ENCODE measurements at regions of chr2 and their contacts with region 1.

Region 1: DNA sequence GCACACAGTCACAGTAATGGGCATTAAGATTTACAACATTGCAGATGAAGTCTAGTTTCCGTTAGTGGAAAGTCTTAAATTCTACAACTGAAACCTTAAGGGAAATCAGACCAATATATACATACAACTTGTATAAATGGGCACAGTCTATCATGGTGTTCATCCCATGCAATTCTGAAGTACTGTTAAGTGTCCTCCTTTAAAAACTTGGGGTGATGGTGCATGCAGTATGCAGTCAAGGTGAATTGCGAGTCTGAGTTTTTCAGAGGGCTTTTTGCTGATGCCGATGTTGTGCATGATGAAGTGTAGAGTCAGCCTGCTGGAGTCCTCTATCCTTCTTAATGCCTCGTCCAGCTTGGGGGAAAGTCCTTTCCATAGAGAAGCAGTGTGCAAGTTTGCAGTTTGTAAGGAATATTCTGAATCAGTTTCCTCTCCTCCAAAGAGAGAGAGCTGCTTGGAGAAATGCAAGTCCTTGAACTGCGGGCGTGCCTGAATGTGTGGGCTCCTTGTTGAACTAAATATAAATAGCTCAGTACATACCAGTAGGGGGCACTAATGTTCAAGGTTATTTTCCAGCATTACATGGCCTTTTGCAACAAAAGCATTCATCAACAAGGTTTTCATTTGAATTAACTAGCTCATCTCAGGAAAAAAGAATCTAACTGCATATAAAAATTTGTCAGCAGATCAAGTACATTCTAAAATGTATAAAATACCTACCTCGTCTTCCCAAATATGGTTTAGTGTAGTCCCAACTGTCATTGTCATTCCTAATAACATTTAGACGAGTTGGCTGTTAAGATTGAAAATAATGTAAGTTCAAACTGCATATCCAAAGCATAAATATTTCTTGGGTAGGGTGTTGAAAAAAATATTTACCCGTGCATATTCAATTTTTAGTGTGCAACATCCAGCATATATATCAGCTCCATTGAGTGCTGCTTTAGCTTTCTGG is 21.3 kb downstream of the HNRNPLL start:
- DNase-seq: peak in 1 of 2 donors; percentile 46
- ATAC-seq: peak; percentile 60 to 87 (median 82)
- H3K4me3 ChIP-seq: no peak overlapping the region
- H3K27ac ChIP-seq: no peak overlapping the region
- H3K4me1 ChIP-seq: peaks cover 0 to 21% (median 9%) of the 10 kb centered on the region in 9 donors
- H3K27me3 ChIP-seq: no peaks in the 10 kb centered on the region
- CTCF ChIP-seq: peak; percentile 34 to 81 (median 75)

Region 2: DNA sequence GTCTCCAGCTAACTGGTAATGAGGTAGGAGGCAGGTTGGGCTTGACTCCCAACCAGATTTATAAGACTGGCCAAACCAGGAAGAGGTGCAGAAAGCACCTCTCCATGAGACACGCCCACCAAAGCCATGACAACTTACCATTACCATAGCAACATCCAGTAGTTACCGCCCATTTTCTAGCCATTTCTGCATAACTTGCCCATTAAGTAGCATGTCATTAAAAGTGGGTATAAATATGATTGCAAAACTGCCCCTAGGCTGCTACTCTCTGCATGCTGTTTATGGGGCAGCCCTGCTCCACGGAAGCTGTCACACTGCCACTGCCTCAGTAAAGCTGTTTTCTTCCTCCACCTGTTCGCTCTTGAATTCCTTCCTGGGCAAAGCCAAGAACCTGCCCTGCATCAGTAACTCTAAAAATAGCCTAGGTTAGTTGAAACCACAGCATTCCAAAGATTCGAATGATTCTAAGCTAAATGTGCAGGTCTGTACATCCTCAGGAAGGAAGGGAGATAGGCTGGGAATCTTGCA is 336.3 kb before region 1 on chr2:
- intact Hi-C with region 1: no loop called
- DNase-seq: no peak
- ATAC-seq: no peak
- H3K4me3 ChIP-seq: no peak overlapping the region
- H3K27ac ChIP-seq: no peak overlapping the region
- H3K4me1 ChIP-seq: no peaks in the 10 kb centered on the region
- H3K27me3 ChIP-seq: no peaks in the 10 kb centered on the region
- CTCF ChIP-seq: no peak

Region 3: DNA sequence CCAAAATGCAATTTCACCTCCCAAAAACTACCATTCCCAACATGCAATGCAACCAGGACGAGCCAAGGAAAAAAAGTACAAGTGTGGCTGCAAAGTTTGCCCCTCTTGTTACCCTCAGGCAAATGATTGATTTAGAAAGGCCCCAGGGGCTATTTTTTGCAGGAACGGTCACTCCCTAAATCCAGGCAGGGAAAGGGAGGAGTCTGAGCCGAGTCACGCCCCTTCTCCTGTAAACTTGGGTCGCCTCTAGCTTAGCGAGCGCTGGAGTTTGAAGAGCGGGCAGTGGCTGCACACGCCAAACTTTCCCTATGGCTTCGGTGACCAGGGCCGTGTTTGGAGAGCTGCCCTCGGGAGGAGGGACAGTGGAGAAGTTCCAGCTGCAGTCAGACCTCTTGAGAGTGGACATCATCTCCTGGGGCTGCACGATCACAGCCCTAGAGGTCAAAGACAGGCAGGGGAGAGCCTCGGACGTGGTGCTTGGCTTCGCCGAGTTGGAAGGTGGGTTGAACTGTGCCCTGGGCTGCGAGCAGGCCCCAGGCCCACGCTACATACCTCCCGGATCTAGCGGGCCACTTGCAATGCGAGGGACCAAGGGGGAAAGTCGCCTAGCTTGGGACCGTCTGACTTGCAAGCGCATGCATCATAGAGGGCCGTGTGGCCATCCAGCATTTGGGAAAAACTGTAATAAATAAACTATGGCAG is 84.5 kb after region 1 on chr2 and contains the start of gene GALM:
- intact Hi-C with region 1: loop called in 1 of 10 experiments (anchors 5 kb)
- DNase-seq: peak; percentile 78 to 91
- ATAC-seq: peak; percentile 94 to 98 (median 96)
- H3K4me3 ChIP-seq: peak within 1 kb of the TSS; percentile 39 to 78 (median 65)
- H3K27ac ChIP-seq: peak within 1 kb of the TSS; percentile 29 to 87 (median 71)
- H3K4me1 ChIP-seq: peaks cover 0 to 55% (median 10%) of the 10 kb centered on the region in 9 donors
- H3K27me3 ChIP-seq: no peaks in the 10 kb centered on the region
- CTCF ChIP-seq: no peak
- total RNA-seq, gene GALM: 9.4 to 18.6 (median 11.0) TPM

Region 4: GRCh38 chr2:38720613-38721241 is 139.3 kb after region 1 on chr2:
- intact Hi-C with region 1: loop called in 7 of 10 experiments (anchors 2 to 10 kb)
- DNase-seq: peak; percentile 73 to 80
- ATAC-seq: peak; percentile 86 to 94 (median 90)
- H3K4me3 ChIP-seq: no peak overlapping the region
- H3K27ac ChIP-seq: peak overlapping the region in 7 of 10 donors; percentile 11 to 78 (median 63)
- H3K4me1 ChIP-seq: peaks cover 0 to 38% (median 19%) of the 10 kb centered on the region in 9 donors
- H3K27me3 ChIP-seq: no peaks in the 10 kb centered on the region
- CTCF ChIP-seq: no peak

Region 5: GRCh38 chr2:38728694-38729093 is 147.2 kb after region 1 on chr2:
- intact Hi-C with region 1: loop called in 9 of 10 experiments (anchors 1 to 10 kb)
- DNase-seq: no peak
- ATAC-seq: no peak
- H3K4me3 ChIP-seq: no peak overlapping the region
- H3K27ac ChIP-seq: no peak overlapping the region
- H3K4me1 ChIP-seq: peaks cover 0 to 4% (median under 1%) of the 10 kb centered on the region in 9 donors
- H3K27me3 ChIP-seq: no peaks in the 10 kb centered on the region
- CTCF ChIP-seq: no peak

Region 6: DNA sequence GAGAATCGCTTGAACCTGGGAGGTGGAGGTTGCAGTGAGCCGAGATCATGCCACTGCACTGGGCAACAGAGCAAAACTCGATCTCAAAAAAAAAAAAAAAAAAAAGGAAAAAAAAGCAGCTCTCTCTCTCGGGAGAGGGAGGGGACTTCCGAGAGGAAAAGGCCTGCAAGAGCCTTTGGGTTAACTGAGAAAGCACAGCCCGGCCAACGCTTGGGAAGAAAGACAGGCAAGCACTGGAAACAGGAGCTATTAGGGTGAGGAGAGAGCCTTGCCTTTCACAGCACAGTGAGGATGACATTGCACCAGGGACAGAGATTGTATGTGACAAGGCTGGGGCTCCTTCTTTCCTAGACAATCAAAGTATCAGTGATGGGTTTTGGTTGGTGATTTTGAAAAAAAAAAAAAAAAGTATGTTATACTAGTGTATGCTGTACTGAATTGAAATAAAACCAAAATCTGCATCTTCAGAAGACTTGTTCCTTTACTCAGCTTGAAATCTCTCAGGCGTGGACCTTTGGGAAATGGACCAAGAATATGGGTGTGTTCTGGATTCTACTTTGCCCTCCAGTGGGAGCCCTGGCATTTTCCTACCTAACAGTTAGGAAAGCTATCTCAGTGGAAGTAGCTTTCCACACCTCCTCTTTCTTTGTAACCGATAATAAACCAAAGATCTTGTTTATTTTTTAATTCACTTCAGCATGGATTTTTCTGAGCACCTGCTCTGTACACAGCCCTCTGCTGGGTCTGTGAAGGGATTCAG is 153.0 kb after region 1 on chr2:
- intact Hi-C with region 1: loop called in 6 of 10 experiments (anchors 5 to 10 kb)
- DNase-seq: peak in 1 of 2 donors; percentile 55
- ATAC-seq: peak in 6 of 8 donors; percentile 50 to 64 (median 56)
- H3K4me3 ChIP-seq: no peak overlapping the region
- H3K27ac ChIP-seq: peak overlapping the region in 1 of 10 donors; percentile 9
- H3K4me1 ChIP-seq: peaks cover 0 to 37% (median 18%) of the 10 kb centered on the region in 9 donors
- H3K27me3 ChIP-seq: no peaks in the 10 kb centered on the region
- CTCF ChIP-seq: no peak

Region 7: DNA sequence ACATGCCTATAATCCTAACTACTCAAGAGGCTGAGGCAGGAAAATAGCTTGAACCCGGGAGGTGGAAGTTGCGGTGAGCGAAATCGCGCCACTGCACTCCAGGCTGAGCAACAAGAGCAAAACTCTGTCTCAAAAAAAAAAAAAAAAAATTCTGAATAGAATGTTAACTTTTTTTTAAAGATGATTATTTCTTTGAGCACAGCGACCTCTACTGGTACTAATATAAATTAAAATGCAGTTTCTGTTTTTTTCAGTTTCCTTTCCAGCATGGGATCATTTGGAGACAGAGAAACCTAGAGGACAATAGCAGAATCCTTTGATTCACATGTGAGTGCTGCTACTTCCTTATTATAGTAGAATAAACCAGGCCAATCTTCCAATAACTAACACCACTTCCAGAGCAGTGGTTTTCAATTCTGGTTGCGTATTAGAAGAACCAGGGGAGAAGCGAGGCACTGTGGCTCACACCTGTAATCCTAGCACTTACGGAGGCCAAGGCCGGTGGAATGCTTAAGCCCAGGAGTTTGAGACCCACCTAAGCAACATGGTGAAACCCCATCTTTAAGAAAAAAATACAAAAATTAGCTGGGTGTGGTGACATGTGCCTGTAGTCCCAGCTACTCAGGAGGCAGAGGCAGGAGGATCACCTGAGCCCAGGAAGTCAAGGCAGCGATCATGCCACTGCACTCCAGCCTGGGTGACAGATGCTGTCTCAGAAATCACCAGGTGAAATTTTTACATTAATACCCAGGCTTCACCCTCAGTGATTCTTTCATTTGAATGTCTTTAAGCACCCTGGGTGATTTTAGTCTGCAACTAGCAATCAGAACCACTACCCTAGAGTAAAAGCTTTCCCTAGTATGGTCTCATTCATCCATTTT is 159.6 kb after region 1 on chr2:
- intact Hi-C with region 1: loop called in 7 of 10 experiments (anchors 1 to 5 kb)
- DNase-seq: no peak
- ATAC-seq: peak in 6 of 8 donors; percentile 12 to 47 (median 26)
- H3K4me3 ChIP-seq: peak overlapping the region in 1 of 10 donors; percentile 9
- H3K27ac ChIP-seq: peak overlapping the region in 5 of 10 donors; percentile 14 to 40 (median 38)
- H3K4me1 ChIP-seq: peaks cover 0 to 58% (median 37%) of the 10 kb centered on the region in 9 donors
- H3K27me3 ChIP-seq: no peaks in the 10 kb centered on the region
- CTCF ChIP-seq: peak; percentile 48 to 76 (median 64)

Measured in heart right ventricle (tissue), 16 donors.